Activated CD4-positive, alpha-beta T cell treated with anti-CD3 and anti-CD28 coated beads for 36 hours (primary cell): ENCODE measurements at regions of chr9 and their contacts with region 1.

Region 1: GRCh38 chr9:77375956-77376532 is 198.7 kb downstream of the VPS13A start:
- DNase-seq: no peak
- ATAC-seq: no peak
- H3K4me3 Mint-ChIP-seq: no peak overlapping the region
- H3K27ac Mint-ChIP-seq: no peak overlapping the region
- H3K4me1 Mint-ChIP-seq: no peaks in the 10 kb centered on the region
- H3K27me3 Mint-ChIP-seq: no peaks in the 10 kb centered on the region

Region 2: GRCh38 chr9:77427256-77427927 is 51.3 kb after region 1 on chr9:
- CTCF ChIA-PET with region 1: no interaction called
- POLR2A ChIA-PET with region 1: no interaction called
- intact Hi-C with region 1: loop called in 1 of 2 experiments (anchors 5 kb)
- DNase-seq: no peak
- ATAC-seq: no peak
- H3K4me3 Mint-ChIP-seq: no peak overlapping the region
- H3K27ac Mint-ChIP-seq: no peak overlapping the region
- H3K4me1 Mint-ChIP-seq: no peaks in the 10 kb centered on the region
- H3K27me3 Mint-ChIP-seq: no peaks in the 10 kb centered on the region